ENCODE measurements at regions of chr1 and their contacts with region 1.

Region 1: DNA sequence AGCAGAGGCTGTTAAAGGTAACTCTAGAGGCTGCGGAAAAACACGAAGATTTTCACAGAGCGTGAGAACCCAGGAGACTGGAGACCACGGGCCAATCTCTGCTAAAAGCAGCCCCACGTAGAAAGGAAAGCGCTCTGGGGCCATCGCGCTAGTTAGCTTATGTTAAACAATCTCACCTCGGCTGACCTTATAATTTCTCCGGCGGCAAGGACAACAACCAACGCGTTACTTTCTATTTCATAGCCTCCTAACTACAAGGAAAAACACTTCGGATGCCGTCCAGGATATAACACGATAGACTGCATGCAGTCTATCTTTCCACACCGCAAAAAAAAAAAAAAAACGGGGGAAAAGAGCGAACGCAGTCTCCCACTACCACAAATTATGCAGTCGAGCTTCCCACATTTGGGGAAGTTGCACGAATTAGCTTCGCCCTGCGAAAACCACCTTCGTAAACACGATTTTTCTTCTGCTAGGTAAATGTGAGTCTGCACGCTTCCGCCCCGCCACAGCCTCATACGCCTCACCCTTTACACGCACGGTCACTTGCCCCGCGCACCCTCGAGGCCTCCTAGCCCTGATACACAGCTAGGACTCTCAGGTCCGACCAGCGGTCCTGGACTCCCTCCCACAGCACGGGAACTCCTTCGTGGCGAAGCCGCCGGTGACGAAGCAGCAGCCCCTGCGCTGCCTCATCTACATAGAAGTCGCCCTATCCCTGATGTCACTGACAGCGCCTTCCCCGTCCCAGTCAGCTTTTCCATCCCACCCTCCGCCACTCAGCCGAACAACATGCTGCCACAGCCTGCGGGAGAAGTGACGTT is 87.8 kb downstream of the PRKAB2 start:
- DNase-seq: peak; percentile 26 to 84 (median 49)
- ATAC-seq: peak; percentile 78
- H3K4me3 ChIP-seq: peak overlapping the region; percentile 72
- H3K4me3 Mint-ChIP-seq: peak overlapping the region; percentile 93
- H3K27ac ChIP-seq: peak overlapping the region; percentile 30 to 81
- H3K27ac Mint-ChIP-seq: peak overlapping the region; percentile 97
- H3K4me1 ChIP-seq: peaks cover 32% of the 10 kb centered on the region
- H3K4me1 Mint-ChIP-seq: peaks cover 41% of the 10 kb centered on the region
- H3K27me3 ChIP-seq: peaks cover 19 to 23% of the 10 kb centered on the region in 2 experiments
- H3K27me3 Mint-ChIP-seq: peaks cover 58% of the 10 kb centered on the region
- CTCF ChIP-seq: no peak

Region 2: DNA sequence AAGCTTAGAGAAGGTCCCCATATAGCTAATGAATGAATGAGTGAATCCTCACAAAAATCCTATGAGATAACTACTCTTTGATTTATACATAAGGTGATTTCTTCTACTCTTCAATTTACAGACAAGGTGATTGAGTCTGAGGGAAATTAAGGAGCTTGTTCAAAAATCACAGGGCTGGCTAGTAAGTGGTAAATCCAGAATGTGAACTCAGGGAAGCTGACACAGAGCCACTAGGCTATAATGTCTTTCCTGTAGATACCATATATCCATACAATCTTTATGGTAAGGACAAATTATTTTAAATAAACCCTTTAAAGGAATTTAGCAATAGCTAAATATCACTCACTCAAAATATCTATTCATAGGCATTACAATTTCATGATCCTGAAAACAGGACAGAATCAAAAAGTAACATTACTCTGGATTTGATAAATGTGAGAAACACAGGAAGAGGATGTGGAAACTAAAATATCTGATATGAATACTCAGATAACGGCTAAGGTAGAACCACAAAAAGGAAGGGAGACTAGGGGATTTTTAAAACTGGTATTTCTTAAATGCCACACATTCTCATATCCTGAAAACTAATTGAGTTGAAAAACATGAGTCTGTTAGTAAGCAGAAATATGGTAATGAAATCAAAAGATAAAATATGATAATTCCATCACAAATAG is 38.2 kb before region 1 on chr1:
- CTCF ChIA-PET with region 1: no interaction called
- POLR2A ChIA-PET with region 1: interaction called, 14 read pairs
- intact Hi-C with region 1: no loop called
- DNase-seq: peak in 3 of 14 experiments; percentile 13 to 45 (median 28)
- ATAC-seq: peak; percentile 54
- H3K4me3 ChIP-seq: no peak overlapping the region
- H3K4me3 Mint-ChIP-seq: peak overlapping the region; percentile 70
- H3K27ac ChIP-seq: peak overlapping the region in 1 of 2 donors; percentile 41
- H3K27ac Mint-ChIP-seq: peak overlapping the region; percentile 82
- H3K4me1 ChIP-seq: peaks cover 12% of the 10 kb centered on the region
- H3K4me1 Mint-ChIP-seq: peaks cover 44% of the 10 kb centered on the region
- H3K27me3 ChIP-seq: no peaks in the 10 kb centered on the region
- H3K27me3 Mint-ChIP-seq: no peaks in the 10 kb centered on the region
- CTCF ChIP-seq: no peak

Region 3: GRCh38 chr1:147072370-147073061 is 12.0 kb before region 1 on chr1:
- CTCF ChIA-PET with region 1: no interaction called
- POLR2A ChIA-PET with region 1: interaction called, 10 read pairs
- intact Hi-C with region 1: no loop called
- DNase-seq: peak in 3 of 14 experiments; percentile 25 to 51 (median 44)
- ATAC-seq: peak; percentile 59
- H3K4me3 ChIP-seq: peak overlapping the region; percentile 42
- H3K4me3 Mint-ChIP-seq: peak overlapping the region; percentile 86
- H3K27ac ChIP-seq: no peak overlapping the region
- H3K27ac Mint-ChIP-seq: peak overlapping the region; percentile 8
- H3K4me1 ChIP-seq: peaks cover 14% of the 10 kb centered on the region
- H3K4me1 Mint-ChIP-seq: peaks cover 27% of the 10 kb centered on the region
- H3K27me3 ChIP-seq: peaks cover 27 to 55% of the 10 kb centered on the region in 2 experiments
- H3K27me3 Mint-ChIP-seq: peaks cover 68% of the 10 kb centered on the region
- CTCF ChIP-seq: no peak